Mammary epithelial cell (primary cell): ENCODE measurements at regions of chr17 and their contacts with region 1.

Region 1: DNA sequence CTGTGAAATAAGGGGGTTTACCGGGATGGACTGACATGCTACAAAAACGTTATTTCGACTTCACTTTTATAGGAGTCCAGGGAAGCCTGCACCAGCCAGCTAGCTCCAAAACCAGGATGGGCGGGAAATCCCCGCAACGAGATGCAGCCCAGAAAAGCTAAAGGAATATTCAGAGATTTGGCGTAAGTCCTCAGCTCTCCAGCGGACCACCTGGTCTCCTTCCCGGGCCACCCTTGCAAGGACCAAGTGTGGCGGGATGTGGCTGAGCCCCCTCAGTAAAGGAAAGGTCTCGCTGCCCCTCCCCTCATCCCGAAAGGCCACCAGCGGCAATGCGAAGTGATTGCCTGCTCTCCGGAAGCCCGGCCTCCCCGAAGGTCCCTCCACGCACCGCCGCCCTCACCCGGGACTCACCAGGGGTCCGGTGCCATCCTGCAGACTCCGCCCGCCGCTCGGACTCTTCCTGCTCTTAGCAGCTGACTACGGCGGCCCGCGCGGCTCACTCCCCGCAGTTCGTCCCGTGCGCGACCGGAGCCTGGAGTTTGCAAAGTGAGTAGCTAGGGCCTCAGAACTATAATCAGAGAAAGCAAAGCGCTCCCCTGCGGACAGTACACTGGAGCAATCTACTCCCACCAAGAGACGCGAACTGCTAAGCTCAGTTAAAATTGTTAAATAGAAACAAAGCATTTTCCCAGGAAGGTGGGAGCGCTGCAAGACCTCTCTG is at the start of gene STX8:
- DNase-seq: peak; percentile 84
- H3K4me3 ChIP-seq: peak within 1 kb of the TSS; percentile 69 to 76 (median 75)
- H3K27ac ChIP-seq: peak within 1 kb of the TSS; percentile 33
- H3K4me1 ChIP-seq: peaks cover 14% of the 10 kb centered on the region
- H3K27me3 ChIP-seq: no peaks in the 10 kb centered on the region
- CTCF ChIP-seq: no peak
- total RNA-seq, gene STX8: 45.3 to 49.1 TPM

Region 2: GRCh38 chr17:9522074-9522473 is 53.5 kb before region 1 on chr17:
- CTCF ChIA-PET with region 1: no interaction called
- dilution Hi-C with region 1: no loop called
- in situ Hi-C with region 1: no loop called
- intact Hi-C with region 1: no loop called
- DNase-seq: peak; percentile 14
- H3K4me3 ChIP-seq: no peak overlapping the region
- H3K27ac ChIP-seq: no peak overlapping the region
- H3K4me1 ChIP-seq: no peaks in the 10 kb centered on the region
- H3K27me3 ChIP-seq: no peaks in the 10 kb centered on the region
- CTCF ChIP-seq: peak; percentile 39 to 56

Region 3: DNA sequence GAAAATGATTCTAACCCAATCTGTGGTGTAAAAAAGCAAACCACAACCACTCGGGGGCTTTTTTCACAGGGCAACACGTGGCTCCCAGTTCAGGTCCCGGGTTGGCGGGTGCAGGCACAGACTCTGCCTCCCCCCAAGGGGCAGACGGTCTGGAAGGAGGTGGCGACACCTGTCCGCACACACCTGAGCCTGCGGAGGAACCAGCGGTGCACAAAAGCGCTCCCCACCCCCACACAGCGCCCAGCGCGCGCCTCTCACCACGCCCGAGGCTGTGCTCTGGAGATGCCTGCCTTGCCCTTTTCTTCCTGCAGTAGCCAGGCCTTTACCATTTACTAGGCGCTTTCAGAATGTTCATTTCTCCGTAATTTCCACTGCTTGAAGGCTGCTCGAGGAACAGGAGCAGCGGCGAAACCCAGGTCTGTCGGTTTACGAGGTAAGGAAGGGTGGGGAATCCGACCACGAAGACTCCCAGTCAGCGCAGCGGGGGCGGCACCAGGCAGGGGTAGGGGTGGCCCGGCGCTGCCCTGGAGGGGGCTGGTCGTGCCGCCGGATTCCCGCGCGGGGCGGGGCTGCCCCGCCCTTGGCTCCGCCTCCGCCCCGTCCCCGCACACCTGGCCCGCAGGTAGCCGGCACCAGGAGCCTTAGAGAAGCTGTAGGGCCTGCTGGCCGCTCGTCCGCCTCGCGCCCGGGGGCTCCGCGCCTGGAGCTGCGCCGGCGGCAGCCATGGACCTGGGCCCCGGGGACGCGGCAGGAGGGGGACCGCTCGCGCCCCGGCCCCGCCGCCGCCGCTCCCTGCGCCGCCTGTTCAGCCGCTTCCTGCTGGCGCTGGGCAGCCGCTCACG is 69.6 kb after region 1 on chr17 and contains the start of gene USP43:
- CTCF ChIA-PET with region 1: no interaction called
- dilution Hi-C with region 1: no loop called
- in situ Hi-C with region 1: no loop called
- intact Hi-C with region 1: loop called (anchors 1 kb)
- DNase-seq: peak; percentile 81
- H3K4me3 ChIP-seq: peak within 1 kb of the TSS; percentile 63 to 79 (median 69)
- H3K27ac ChIP-seq: peak within 1 kb of the TSS; percentile 88
- H3K4me1 ChIP-seq: peaks cover 25% of the 10 kb centered on the region
- H3K27me3 ChIP-seq: no peaks in the 10 kb centered on the region
- CTCF ChIP-seq: peak in 1 of 2 donors; percentile 13
- total RNA-seq, gene USP43: 8.0 to 9.3 TPM

Region 4: DNA sequence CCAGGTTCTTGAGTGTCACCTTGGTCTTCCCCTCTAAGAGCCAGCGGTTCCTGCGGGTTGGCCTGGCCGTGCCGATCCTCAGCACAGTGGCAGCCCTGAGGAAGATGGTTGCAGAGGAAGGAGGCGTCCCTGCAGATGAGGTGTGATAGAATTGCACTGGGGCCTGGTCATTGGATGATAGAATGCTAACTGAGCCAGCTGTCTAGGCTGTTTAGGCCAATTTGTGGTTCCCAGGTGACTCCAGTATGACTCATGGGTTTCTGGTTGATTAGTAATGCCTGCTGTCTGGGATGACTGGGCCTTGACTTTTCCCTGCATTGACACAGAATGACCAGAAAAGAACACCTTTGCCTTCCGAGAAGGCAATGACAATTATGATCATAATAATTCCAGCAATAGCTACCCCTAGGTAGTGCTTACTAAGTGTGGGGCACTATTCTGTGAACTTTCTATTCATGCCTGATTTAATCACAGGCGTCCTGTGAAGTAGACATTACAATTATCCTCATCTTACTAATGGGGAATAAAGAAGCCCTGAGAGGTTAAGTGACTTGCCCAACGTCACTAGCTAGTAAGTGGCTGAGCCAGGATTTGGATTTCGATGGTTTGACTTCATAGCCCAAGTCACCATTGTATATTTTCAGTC is 101.3 kb after region 1 on chr17:
- CTCF ChIA-PET with region 1: no interaction called
- dilution Hi-C with region 1: no loop called
- in situ Hi-C with region 1: no loop called
- intact Hi-C with region 1: loop called (anchors 5 kb)
- DNase-seq: peak; percentile 99
- H3K4me3 ChIP-seq: no peak overlapping the region
- H3K27ac ChIP-seq: peak overlapping the region; percentile 87
- H3K4me1 ChIP-seq: peaks cover 18% of the 10 kb centered on the region
- H3K27me3 ChIP-seq: no peaks in the 10 kb centered on the region
- CTCF ChIP-seq: no peak

Region 5: GRCh38 chr17:9750524-9750923 is 175.0 kb after region 1 on chr17:
- CTCF ChIA-PET with region 1: no interaction called
- dilution Hi-C with region 1: no loop called
- in situ Hi-C with region 1: no loop called
- intact Hi-C with region 1: loop called (anchors 1 kb)
- DNase-seq: no peak
- H3K4me3 ChIP-seq: no peak overlapping the region
- H3K27ac ChIP-seq: no peak overlapping the region
- H3K4me1 ChIP-seq: no peaks in the 10 kb centered on the region
- H3K27me3 ChIP-seq: no peaks in the 10 kb centered on the region
- CTCF ChIP-seq: no peak

Region 6: DNA sequence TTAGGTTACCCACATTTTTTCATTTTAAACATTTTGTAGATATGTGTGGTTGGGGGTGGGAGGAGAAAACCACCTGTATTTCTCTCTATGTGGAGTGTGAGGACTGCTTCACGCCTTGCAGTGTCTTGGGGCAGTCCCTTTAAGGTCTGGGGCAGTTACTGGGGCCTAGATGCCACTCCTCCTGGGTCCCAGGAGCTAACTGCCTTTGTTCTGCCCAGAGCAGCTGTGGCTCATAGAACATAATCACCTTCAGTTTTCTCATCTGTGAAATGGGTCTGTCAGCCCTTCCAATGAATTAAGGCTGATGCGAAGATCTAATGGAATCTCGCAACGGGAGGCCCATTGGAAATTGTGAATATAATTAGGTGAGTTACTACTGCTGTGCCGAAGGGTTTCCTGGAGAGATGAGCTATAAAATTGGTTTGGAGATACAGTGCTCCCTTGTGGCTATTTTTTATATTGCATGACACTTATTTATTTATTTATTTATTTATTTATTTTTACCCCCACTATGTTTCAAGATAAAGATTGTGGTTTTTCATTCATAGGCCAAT is 192.9 kb after region 1 on chr17:
- CTCF ChIA-PET with region 1: interaction called, 3 read pairs
- dilution Hi-C with region 1: no loop called
- in situ Hi-C with region 1: no loop called
- intact Hi-C with region 1: loop called (anchors 2 kb)
- DNase-seq: peak; percentile 20
- H3K4me3 ChIP-seq: no peak overlapping the region
- H3K27ac ChIP-seq: no peak overlapping the region
- H3K4me1 ChIP-seq: no peaks in the 10 kb centered on the region
- H3K27me3 ChIP-seq: no peaks in the 10 kb centered on the region
- CTCF ChIP-seq: peak; percentile 36 to 45